Activated naive CD8-positive, alpha-beta T cell treated with anti-CD3 and anti-CD28 coated beads, Interleukin-2, amount 10 ng/mL, durations not matched to agents 7 days and 5 days (primary cell): ENCODE measurements at regions of chr16 and their contacts with region 1.

Region 1: GRCh38 chr16:29926005-29926710 is at the start of gene KCTD13:
- DNase-seq: peak; percentile 99
- ATAC-seq: peak; percentile 92
- H3K4me3 Mint-ChIP-seq: peak within 1 kb of the TSS; percentile 94
- H3K27ac Mint-ChIP-seq: peak within 1 kb of the TSS; percentile 93
- H3K4me1 Mint-ChIP-seq: peaks cover 22% of the 10 kb centered on the region
- H3K27me3 Mint-ChIP-seq: peaks cover 3% of the 10 kb centered on the region
- total RNA-seq, gene KCTD13: 49.7 to 50.0 TPM

Region 2: DNA sequence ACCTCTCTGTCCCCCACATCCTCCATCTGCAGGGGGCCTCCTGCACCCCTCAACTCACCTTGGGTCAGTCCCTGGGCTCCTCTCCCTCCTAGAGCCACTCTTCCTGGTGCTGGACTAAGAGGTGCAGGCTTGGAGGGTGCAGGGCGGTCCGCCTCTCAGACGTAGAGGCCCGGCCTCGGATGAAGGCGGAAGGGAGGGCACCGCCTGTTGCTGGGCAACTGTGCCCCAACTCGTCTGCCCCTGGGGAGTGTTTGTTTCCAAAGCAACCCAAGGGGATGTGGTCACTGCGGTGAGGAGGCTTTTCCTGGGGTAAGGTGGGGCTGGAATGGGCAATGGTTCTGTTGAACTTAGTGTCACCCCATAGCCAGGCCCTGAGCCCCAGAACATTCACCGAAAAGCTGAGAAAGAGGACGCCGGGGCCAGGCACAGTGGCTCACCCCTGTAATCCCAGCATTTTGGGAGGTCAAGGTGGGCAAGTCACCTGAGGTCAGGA is 180.3 kb before region 1 on chr16 and contains the start of gene C16orf54:
- POLR2A ChIA-PET with region 1: no interaction called
- DNase-seq: peak; percentile 88
- ATAC-seq: peak; percentile 81
- H3K4me3 Mint-ChIP-seq: peak within 1 kb of the TSS; percentile 98
- H3K27ac Mint-ChIP-seq: peak within 1 kb of the TSS; percentile 98
- H3K4me1 Mint-ChIP-seq: peaks cover 38% of the 10 kb centered on the region
- H3K27me3 Mint-ChIP-seq: no peaks in the 10 kb centered on the region
- total RNA-seq, gene C16orf54: 84.2 to 88.0 TPM

Region 3: GRCh38 chr16:29862884-29863668 is 63.1 kb before region 1 on chr16 and contains the start of gene CDIPT:
- POLR2A ChIA-PET with region 1: interaction called, 10 read pairs
- DNase-seq: peak; percentile 86
- ATAC-seq: peak; percentile 97
- H3K4me3 Mint-ChIP-seq: peak within 1 kb of the TSS; percentile 96
- H3K27ac Mint-ChIP-seq: peak within 1 kb of the TSS; percentile 100
- H3K4me1 Mint-ChIP-seq: peaks cover 13% of the 10 kb centered on the region
- H3K27me3 Mint-ChIP-seq: no peaks in the 10 kb centered on the region
- total RNA-seq, gene CDIPT: 65.0 to 74.7 TPM

Region 4: DNA sequence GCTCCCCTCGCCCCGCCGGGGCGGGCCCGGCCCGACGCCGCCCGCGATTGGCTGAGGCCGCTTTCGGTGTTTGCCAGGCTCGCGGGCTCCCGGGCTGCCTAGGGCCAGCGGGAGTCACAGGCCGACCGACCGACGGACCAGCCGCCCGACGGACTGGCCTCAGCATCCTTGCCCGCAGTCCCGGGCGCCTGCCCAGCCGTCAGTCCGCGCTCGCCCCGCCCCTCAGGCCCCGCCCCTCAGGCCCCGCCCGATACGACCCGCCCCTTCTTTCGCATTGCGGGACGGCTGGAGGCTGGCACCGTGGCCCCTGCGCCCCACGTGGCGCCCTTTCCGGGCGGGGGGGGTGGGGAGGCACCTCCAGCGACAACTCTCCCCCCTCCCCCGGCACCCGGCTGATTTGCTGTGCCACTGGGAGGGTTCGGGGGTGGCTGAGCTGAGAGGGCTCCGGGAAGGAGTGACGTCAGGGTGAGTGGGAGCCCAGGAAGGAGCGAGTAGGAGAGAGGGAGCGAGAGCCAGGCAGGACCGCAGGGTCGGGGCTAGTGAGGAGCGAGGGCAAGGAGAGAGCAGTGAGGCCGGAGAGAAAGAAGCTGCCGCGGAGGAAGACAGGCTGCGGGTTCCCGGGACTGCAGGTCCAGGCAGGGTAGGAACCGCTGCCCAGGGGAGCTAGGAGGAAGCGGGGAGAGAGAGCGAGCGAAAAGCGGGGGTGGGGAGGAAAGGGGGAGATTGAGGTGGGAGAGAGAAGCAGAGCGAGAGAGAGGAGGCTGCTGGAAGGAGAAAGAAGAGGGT is 25.9 kb before region 1 on chr16 and contains the start of gene ASPHD1:
- POLR2A ChIA-PET with region 1: interaction called, 17 read pairs
- DNase-seq: peak; percentile 93
- ATAC-seq: peak; percentile 83
- H3K4me3 Mint-ChIP-seq: peak within 1 kb of the TSS; percentile 67
- H3K27ac Mint-ChIP-seq: no peak within 1 kb of the TSS
- H3K4me1 Mint-ChIP-seq: peaks cover 11% of the 10 kb centered on the region
- H3K27me3 Mint-ChIP-seq: peaks cover 29% of the 10 kb centered on the region
- total RNA-seq, gene ASPHD1: 0.42 TPM in 1 of 2 experiments, not detected in the other

Region 5: DNA sequence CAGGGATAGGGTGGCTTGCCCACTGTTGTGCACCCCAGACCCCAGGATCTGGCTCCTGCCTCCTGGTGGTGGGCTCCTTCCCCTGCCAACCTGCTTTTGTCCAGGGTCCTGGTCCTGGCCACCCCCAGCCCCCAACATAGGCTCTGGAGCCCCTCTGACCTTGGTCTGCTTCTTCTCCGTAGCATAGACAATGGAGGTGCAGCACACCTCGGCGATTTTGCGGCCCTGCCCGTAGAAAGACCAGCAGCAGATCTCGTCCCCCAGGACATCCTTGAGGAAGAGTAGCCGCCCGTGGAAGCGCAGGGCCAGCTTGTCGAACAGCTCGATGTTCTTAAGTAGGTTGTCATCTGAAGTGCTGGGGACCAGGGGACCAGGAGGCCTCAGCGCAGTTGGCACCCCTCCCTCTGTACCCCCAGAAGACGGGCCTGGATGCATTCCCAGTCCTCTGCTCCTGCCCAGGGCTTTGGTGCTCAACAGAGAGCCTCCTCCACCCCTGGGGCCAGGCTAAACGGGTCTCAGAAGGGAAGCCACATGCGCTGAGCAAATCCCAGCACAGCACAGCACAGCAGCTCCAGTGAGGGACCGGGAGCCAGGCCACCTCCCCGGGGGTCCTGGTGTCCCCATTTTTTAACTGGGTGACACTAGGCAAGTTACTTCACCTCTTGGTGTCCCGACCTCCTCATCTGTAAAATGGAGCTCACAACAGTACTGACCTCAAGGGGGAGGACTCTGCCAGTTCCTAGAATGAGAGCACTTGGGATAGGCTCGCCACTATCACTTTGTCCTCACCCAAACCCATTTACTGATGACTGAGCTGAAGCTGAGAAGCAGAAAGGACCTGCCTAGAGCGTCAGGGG is 15.1 kb before region 1 on chr16:
- POLR2A ChIA-PET with region 1: no interaction called
- DNase-seq: no peak
- ATAC-seq: no peak
- H3K4me3 Mint-ChIP-seq: no peak overlapping the region
- H3K27ac Mint-ChIP-seq: no peak overlapping the region
- H3K4me1 Mint-ChIP-seq: peaks cover 2% of the 10 kb centered on the region
- H3K27me3 Mint-ChIP-seq: no peaks in the 10 kb centered on the region

Region 6: DNA sequence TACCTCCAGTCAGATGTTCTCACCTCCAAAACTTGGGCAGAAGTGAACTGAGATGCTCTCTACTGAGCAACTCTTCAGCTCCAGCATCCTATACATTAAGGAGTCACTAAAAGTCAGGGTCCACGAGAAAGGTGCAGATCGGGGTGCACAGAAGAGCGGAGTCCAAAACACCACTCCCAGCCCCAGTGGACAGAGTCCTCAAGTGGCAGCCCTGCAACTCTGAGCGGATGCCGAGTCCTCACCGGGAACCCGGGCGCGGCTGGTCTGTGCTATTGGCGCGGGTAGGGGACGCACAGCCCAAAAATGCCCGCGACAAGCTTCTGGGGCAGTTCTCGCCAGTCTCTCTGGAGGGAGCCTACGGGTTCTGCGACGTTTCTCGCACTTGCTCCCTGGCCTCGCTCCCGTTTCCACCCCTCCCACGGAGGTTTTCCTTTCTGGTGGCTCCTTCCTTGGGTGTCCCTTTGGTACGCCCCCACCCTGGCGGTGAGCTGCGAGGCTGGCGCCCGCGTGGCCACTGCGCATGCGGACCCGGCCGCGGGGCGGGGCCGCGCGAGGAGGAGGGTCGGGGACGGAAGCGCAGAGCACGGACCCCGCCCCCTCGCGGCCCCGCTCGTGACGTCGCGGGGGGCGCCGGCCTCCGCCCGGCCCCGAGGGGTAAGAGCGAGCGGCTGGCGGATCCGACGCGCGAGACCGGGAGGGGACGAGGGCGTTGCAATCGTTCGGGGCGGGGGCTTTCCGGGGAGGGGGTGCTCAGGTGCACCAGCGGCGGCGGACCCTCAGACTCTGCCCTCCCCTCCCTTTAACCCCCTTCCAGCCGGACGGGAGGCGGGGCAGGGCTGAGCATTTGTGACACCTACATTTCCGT is 35.6 kb after region 1 on chr16 and contains the start of gene TMEM219:
- POLR2A ChIA-PET with region 1: interaction called, 28 read pairs
- DNase-seq: peak; percentile 99
- ATAC-seq: peak; percentile 96
- H3K4me3 Mint-ChIP-seq: peak within 1 kb of the TSS; percentile 81
- H3K27ac Mint-ChIP-seq: peak within 1 kb of the TSS; percentile 87
- H3K4me1 Mint-ChIP-seq: peaks cover 16% of the 10 kb centered on the region
- H3K27me3 Mint-ChIP-seq: no peaks in the 10 kb centered on the region
- total RNA-seq, gene TMEM219: 67.8 to 74.5 TPM

Region 7: DNA sequence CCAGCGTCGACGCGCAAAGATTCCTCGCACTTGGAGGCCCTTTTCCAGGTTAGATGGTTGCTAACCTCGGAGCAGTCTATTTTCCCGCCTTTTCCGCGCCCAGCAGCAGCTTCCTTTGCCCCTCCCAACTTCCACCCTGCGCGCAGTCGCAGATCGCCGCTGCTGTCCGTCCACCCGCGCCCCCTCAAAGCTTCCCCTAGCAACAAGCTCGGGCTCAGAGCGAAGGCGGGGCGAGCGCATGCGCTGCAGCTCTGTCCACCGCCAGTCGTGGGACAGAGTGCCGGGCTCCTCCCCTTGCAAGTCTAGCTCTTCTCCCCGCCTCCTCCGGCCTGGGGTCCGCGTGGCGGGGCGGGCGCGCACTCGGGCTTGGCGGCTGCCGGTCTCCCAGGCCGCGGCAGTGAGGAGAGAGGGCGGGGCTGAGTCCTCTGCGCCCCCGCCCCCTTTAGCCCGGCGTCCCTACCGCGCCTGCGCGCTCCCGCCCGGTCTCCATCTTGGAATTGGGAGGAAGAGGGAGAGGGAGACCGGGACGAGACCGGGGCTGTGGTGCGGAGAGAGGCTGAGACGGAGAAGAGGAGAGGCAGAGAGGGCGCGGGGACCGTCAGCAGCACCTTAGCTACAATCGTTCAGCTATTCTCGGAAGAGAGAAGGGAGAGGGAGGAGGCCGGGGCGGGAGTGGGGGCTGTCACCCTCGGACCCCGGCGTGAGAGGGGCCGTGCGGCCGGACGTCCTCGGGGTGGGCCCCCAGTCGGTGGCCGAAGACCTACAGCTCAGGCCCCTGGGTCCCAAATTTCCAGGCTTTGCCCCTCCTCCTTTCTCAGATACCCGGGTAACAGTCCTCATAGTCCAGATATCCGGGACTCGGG is 47.5 kb after region 1 on chr16 and contains the start of gene TAOK2:
- POLR2A ChIA-PET with region 1: interaction called, 29 read pairs
- DNase-seq: peak; percentile 96
- ATAC-seq: peak; percentile 98
- H3K4me3 Mint-ChIP-seq: peak within 1 kb of the TSS; percentile 86
- H3K27ac Mint-ChIP-seq: peak within 1 kb of the TSS; percentile 96
- H3K4me1 Mint-ChIP-seq: peaks cover 36% of the 10 kb centered on the region
- H3K27me3 Mint-ChIP-seq: no peaks in the 10 kb centered on the region
- total RNA-seq, gene TAOK2: 51.6 to 53.4 TPM

Region 8: GRCh38 chr16:29995911-29996772 is 70.0 kb after region 1 on chr16 and contains the start of gene INO80E:
- POLR2A ChIA-PET with region 1: interaction called, 14 read pairs
- DNase-seq: peak; percentile 99
- ATAC-seq: peak; percentile 95
- H3K4me3 Mint-ChIP-seq: peak within 1 kb of the TSS; percentile 98
- H3K27ac Mint-ChIP-seq: peak within 1 kb of the TSS; percentile 97
- H3K4me1 Mint-ChIP-seq: peaks cover 25% of the 10 kb centered on the region
- H3K27me3 Mint-ChIP-seq: no peaks in the 10 kb centered on the region
- total RNA-seq, gene INO80E: 113 to 118 TPM